Caco-2 (cell line): ENCODE measurements at regions of chr3 and their contacts with region 1.

Region 1: DNA sequence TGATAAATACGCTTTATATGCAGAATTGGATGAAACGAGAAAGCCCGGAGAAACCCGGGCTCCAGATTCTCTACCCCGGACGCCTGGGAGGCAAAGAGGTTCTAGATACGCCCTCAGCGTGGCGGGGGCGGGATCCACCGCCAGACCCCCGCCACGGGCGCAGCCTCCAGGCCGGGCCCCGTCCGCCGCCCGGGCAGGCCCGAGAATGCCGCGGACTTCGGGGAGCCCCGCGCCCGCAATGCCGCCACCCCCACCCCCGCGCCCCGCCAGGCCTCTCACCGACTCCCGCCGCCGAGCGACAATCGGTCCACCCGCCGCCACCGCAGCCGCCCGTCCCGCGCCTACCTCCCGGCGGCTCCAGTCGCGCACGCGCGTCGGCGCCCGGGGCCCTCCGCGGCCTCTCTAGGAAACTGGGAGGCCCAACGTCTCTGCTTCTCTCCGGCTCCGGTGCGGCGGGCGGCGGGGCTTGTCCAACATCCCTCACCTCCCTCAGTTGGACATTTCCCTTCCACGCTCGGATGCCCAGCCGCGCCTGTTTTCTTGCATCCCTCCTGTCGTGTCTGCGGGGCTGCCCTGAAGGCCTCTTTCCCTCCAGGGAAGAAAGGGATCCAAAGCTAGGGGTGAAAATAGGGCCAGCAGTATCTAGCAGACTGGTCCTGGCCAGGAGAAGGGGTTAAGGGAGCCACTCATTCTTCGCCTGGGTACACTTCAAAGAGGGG is at the start of gene ZNF445:
- DNase-seq: peak; percentile 76 to 86
- H3K4me3 ChIP-seq: peak within 1 kb of the TSS; percentile 67
- H3K4me3 Mint-ChIP-seq: peak within 1 kb of the TSS; percentile 88
- H3K27ac Mint-ChIP-seq: peak within 1 kb of the TSS; percentile 71
- H3K4me1 ChIP-seq: peaks cover 12% of the 10 kb centered on the region
- H3K4me1 Mint-ChIP-seq: peaks cover 6% of the 10 kb centered on the region
- H3K27me3 ChIP-seq: no peaks in the 10 kb centered on the region
- H3K27me3 Mint-ChIP-seq: no peaks in the 10 kb centered on the region
- CTCF ChIP-seq: no peak
- total RNA-seq, gene ZNF445: 19.0 TPM in 2 replicates

Region 2: GRCh38 chr3:44510000-44510368 is 32.5 kb after region 1 on chr3:
- CTCF ChIA-PET with region 1: no interaction called
- POLR2A ChIA-PET with region 1: no interaction called
- intact Hi-C with region 1: loop called (anchors 2 kb)
- DNase-seq: no peak
- H3K4me3 ChIP-seq: peak overlapping the region; percentile 56
- H3K4me3 Mint-ChIP-seq: peak overlapping the region; percentile 94
- H3K27ac Mint-ChIP-seq: peak overlapping the region; percentile 95
- H3K4me1 ChIP-seq: peaks cover 11% of the 10 kb centered on the region
- H3K4me1 Mint-ChIP-seq: peaks cover 6% of the 10 kb centered on the region
- H3K27me3 ChIP-seq: no peaks in the 10 kb centered on the region
- H3K27me3 Mint-ChIP-seq: no peaks in the 10 kb centered on the region
- CTCF ChIP-seq: no peak

Region 3: GRCh38 chr3:44554626-44555592 is 77.4 kb after region 1 on chr3 and contains the start of gene ZKSCAN7:
- CTCF ChIA-PET with region 1: no interaction called
- POLR2A ChIA-PET with region 1: no interaction called
- intact Hi-C with region 1: no loop called
- DNase-seq: no peak
- H3K4me3 ChIP-seq: no peak within 1 kb of the TSS
- H3K4me3 Mint-ChIP-seq: no peak within 1 kb of the TSS
- H3K27ac Mint-ChIP-seq: no peak within 1 kb of the TSS
- H3K4me1 ChIP-seq: no peaks in the 10 kb centered on the region
- H3K4me1 Mint-ChIP-seq: no peaks in the 10 kb centered on the region
- H3K27me3 ChIP-seq: no peaks in the 10 kb centered on the region
- H3K27me3 Mint-ChIP-seq: no peaks in the 10 kb centered on the region
- CTCF ChIP-seq: no peak
- total RNA-seq, gene ZKSCAN7: not detected in 2 replicates